Activated T-helper 1 cell treated with anti-CD3 and anti-CD28 coated beads, Interleukin-12 subunit alpha, Interleukin-12 subunit beta, Interleukin-2, Interleukin-4 antibody, amounts not matched to agents 30 ng/mL and 10 ng/mL and 1 ng/mL, durations not matched to agents 14 hours and 24 hours and 36 hours (primary cell): ENCODE measurements at regions of chr10 and their contacts with region 1.

Region 1: GRCh38 chr10:28532383-28533175 is at the start of gene WAC:
- DNase-seq: peak; percentile 94
- H3K4me3 Mint-ChIP-seq: peak within 1 kb of the TSS; percentile 97
- H3K27ac Mint-ChIP-seq: peak within 1 kb of the TSS; percentile 100
- H3K4me1 Mint-ChIP-seq: peaks cover 54% of the 10 kb centered on the region
- H3K27me3 Mint-ChIP-seq: no peaks in the 10 kb centered on the region
- total RNA-seq, gene WAC: 130 and 135 TPM in 2 replicates

Region 2: GRCh38 chr10:27241652-27242472 is 1290.7 kb before region 1 on chr10:
- intact Hi-C with region 1: loop called (anchors 2 kb)
- DNase-seq: peak; percentile 87
- H3K4me3 Mint-ChIP-seq: peak overlapping the region; percentile 89
- H3K27ac Mint-ChIP-seq: peak overlapping the region; percentile 93
- H3K4me1 Mint-ChIP-seq: peaks cover 29% of the 10 kb centered on the region
- H3K27me3 Mint-ChIP-seq: no peaks in the 10 kb centered on the region

Region 3: DNA sequence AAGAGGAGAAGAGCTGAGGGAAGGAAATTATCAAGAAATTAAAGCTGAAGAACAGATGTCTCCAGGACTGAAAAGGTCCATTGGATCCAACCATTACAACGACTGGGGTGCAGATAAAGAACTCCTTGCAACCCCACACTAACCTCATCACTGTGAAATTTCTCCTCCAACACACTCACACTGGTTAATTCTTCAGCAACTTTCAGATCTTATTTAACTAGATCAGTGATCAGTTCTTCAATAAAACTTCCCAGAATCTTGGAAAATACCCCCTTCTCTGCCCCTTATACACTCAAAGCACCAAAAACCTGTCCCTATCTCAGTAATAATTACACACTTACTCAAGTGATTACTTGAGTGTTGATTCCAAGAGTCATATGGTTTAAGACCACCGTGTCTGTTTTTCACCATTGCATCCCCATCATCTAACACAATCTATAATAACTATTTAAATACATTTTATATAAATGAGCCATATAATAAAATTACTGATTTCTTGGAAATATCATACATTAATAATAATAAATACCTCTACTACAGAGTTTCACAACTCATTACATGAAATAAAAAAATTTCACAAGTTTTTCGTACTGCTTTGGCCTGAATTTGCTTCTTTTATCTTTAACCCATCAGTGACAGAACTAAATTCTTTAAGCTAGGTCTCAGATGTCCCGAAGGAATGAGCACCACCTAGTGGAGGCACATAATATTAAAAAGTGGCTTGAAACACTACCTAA is 353.4 kb before region 1 on chr10:
- intact Hi-C with region 1: loop called (anchors 5 kb)
- DNase-seq: peak; percentile 14
- H3K4me3 Mint-ChIP-seq: peak overlapping the region; percentile 43
- H3K27ac Mint-ChIP-seq: peak overlapping the region; percentile 88
- H3K4me1 Mint-ChIP-seq: peaks cover 20% of the 10 kb centered on the region
- H3K27me3 Mint-ChIP-seq: peaks cover 12% of the 10 kb centered on the region

Region 4: GRCh38 chr10:28410420-28411135 is 122.0 kb before region 1 on chr10:
- intact Hi-C with region 1: no loop called
- DNase-seq: no peak
- H3K4me3 Mint-ChIP-seq: no peak overlapping the region
- H3K27ac Mint-ChIP-seq: no peak overlapping the region
- H3K4me1 Mint-ChIP-seq: peaks cover 17% of the 10 kb centered on the region
- H3K27me3 Mint-ChIP-seq: peaks cover 2% of the 10 kb centered on the region

Region 5: GRCh38 chr10:28432210-28432676 is 100.3 kb before region 1 on chr10:
- intact Hi-C with region 1: loop called (anchors 2 kb)
- DNase-seq: no peak
- H3K4me3 Mint-ChIP-seq: no peak overlapping the region
- H3K27ac Mint-ChIP-seq: no peak overlapping the region
- H3K4me1 Mint-ChIP-seq: peaks cover 8% of the 10 kb centered on the region
- H3K27me3 Mint-ChIP-seq: peaks cover 2% of the 10 kb centered on the region

Region 6: GRCh38 chr10:28604567-28605536 is 72.3 kb after region 1 on chr10:
- intact Hi-C with region 1: loop called (anchors 5 kb)
- DNase-seq: no peak
- H3K4me3 Mint-ChIP-seq: no peak overlapping the region
- H3K27ac Mint-ChIP-seq: no peak overlapping the region
- H3K4me1 Mint-ChIP-seq: peaks cover 33% of the 10 kb centered on the region
- H3K27me3 Mint-ChIP-seq: no peaks in the 10 kb centered on the region

Region 7: DNA sequence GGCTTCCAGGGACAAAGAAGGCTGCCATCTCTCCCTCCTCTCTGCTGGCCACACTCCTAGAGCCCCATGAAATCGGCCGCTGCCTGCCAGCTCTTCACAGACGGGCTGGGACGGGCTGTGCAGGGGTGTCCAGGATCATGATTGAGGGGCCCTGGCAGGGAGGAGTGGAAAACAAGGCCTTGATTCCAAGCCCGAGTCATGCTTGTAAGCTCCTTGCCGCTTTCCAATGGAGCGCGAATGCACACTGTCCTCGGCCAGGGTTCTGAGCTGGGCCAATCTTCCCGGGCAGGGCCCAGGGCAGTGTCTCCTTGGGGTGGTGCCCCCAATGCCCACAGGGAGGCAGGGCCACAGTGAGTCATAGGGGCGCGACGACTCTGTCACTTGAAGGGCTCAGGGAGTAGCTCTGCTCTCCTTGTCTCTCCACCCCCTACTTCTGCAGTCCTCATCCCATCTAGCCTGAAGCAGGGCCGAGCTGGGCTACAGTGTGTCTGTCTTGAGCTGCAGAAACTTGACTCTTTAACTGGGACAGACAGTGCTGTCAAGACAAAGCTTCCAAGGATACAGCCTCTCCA is 1288.4 kb after region 1 on chr10:
- intact Hi-C with region 1: no loop called
- DNase-seq: no peak
- H3K4me3 Mint-ChIP-seq: no peak overlapping the region
- H3K27ac Mint-ChIP-seq: no peak overlapping the region
- H3K4me1 Mint-ChIP-seq: no peaks in the 10 kb centered on the region
- H3K27me3 Mint-ChIP-seq: peaks cover 6% of the 10 kb centered on the region